ENCODE measurements at regions of chr5 and their contacts with region 1.

Region 1: DNA sequence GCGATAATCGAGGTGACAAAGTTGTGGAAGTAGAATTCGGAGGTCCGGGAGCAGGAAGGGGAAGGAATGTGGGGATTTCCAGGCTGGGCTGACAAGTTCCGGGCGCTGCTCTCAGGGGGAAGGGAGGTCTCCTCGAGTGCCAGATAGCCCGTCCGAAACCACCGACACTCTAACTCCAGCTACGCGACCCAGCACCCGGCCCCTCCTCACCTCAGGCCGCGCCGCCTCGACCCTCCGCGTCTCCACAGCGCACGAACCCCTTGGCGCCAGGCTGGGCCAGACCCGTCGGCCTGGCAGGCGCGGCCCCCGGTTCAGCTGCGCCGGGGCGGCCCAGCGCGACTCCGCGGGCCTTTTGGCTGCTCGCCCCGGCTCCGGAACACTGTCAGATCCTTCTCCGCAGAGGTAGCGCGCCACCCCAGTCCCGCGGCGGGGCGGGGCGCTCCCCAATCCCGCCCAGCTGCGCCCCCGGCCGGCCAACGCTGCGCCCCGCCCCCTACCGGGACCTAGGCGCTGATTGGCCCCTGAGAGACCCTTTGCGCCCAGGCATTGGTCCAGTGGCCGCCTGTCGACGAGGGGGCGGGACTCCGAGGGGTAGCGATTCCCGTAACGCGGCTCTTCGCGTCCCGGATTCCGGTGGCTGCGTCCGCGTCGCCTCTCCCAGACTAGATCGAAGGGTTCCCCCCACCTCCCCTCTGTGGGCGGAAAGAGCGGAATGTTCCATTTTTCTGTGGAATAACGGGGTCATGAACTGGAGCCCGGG is at the start of gene IL6ST:
- DNase-seq: peak; percentile 97
- H3K4me3 Mint-ChIP-seq: peak within 1 kb of the TSS; percentile 99
- H3K27ac Mint-ChIP-seq: peak within 1 kb of the TSS; percentile 100
- H3K4me1 Mint-ChIP-seq: peaks cover 56% of the 10 kb centered on the region
- H3K27me3 Mint-ChIP-seq: no peaks in the 10 kb centered on the region
- total RNA-seq, gene IL6ST: 61.0 to 64.1 TPM

Region 2: DNA sequence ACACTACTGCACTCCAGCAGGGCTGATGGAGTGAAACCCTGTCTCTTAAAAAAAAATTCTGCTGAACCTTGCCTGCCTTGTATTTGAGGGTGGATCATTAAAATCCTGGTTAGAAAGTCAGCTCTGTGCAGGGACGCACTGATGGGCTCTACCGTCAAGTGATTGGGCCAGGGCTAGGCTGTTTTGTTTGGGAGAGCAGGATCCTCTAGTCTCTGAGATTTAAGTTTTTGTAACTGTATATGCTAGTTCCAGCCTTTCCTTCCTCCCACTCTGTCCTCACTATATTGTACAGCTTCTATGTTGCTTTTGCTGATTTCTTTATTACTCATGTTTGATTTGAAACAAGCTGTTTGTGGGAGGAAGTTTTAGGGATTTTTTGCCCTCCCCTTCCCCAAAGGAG is 245.4 kb before region 1 on chr5:
- CTCF ChIA-PET with region 1: no interaction called
- POLR2A ChIA-PET with region 1: no interaction called
- intact Hi-C with region 1: no loop called
- DNase-seq: no peak
- H3K4me3 Mint-ChIP-seq: no peak overlapping the region
- H3K27ac Mint-ChIP-seq: no peak overlapping the region
- H3K4me1 Mint-ChIP-seq: no peaks in the 10 kb centered on the region
- H3K27me3 Mint-ChIP-seq: no peaks in the 10 kb centered on the region

Region 3: DNA sequence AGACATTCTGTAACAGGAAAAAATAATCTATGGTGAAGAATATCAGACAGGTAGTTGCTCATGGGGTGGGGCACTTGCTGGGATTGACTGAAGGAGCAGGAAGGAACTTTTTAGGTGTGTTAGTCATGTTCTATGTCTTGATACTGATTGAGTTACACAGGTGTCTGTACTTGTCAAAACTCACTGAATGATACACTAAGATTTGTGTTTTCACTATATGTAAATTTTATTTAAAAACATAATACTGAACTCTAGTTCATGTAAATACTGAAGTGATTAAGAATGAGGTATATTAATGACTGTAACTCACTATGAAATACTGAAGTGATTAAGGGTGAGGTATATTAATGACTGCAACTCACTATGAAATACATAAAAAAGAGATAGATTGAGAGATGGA is 28.5 kb before region 1 on chr5:
- CTCF ChIA-PET with region 1: no interaction called
- POLR2A ChIA-PET with region 1: interaction called, 4 read pairs
- intact Hi-C with region 1: loop called (anchors 2 kb)
- DNase-seq: no peak
- H3K4me3 Mint-ChIP-seq: no peak overlapping the region
- H3K27ac Mint-ChIP-seq: peak overlapping the region; percentile 34
- H3K4me1 Mint-ChIP-seq: peaks cover 45% of the 10 kb centered on the region
- H3K27me3 Mint-ChIP-seq: no peaks in the 10 kb centered on the region

Region 4: DNA sequence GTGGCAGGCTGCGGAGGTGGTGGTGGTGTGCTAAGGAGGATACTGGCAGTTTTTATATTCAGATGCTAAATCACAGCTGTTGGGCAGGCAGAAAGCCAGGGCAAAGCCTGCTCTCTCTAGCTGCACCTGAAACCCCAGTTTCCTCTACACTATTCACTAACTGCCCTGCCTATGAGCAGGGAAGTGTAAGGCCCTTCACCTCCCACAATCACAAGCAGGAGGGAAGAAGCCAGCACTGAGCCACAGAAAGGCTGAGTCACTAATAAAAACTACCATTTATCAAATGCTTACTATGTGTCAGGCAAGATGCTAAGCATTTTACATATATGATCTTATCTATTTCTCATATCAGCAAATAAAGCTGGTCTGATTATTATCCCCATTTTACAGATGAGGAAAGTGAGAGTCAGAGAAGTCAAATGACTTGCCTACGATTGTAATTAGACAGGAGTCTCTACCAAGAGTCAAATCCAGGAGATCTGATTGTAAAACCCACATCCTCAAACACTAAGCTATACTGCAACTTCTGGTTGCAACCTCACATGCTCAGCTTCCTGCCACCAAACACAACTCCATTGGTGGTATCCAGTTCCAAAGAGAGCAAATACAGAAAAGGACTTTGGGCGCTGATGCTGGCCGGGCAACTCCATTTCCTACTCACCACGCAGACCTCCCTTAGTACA is 17.7 kb after region 1 on chr5:
- CTCF ChIA-PET with region 1: interaction called, 3 read pairs
- POLR2A ChIA-PET with region 1: interaction called, 17 read pairs
- intact Hi-C with region 1: loop called (anchors 1 kb)
- DNase-seq: peak; percentile 61
- H3K4me3 Mint-ChIP-seq: peak overlapping the region; percentile 31
- H3K27ac Mint-ChIP-seq: peak overlapping the region; percentile 81
- H3K4me1 Mint-ChIP-seq: peaks cover 30% of the 10 kb centered on the region
- H3K27me3 Mint-ChIP-seq: no peaks in the 10 kb centered on the region

Region 5: DNA sequence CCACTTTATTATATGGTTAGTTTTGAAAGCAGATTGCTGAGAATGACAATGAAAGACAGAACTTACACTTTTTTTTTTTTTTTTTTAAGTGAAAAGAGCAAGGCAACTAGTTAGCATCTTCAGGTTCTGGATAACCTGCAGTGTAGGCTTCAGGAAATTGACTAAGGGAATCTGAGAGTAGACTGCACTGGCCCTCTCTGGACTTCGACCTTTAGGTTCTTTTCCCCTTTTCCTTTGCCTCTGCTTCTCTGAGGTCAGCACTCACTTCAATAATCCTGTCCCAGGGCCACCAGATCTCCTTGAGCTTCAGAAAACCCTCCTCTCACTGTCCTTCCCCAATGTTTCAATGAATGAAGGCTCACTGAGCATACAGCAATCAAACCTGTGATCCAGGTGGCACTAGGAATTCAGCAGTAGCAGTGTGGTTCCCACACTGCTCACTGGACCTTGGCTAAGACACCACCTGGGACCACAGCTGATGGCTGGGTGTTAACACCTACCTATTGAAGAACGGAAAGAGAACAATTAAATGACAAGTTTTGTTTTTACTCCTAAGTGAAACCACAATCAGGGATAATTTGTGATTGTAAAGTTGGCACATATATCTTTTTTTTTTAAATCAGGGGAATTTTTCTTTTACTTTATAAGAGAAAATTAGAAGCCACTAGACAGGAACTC is 85.8 kb after region 1 on chr5:
- CTCF ChIA-PET with region 1: interaction called, 4 read pairs
- POLR2A ChIA-PET with region 1: interaction called, 6 read pairs
- intact Hi-C with region 1: loop called (anchors 1 kb)
- DNase-seq: peak; percentile 50
- H3K4me3 Mint-ChIP-seq: peak overlapping the region; percentile 2
- H3K27ac Mint-ChIP-seq: peak overlapping the region; percentile 71
- H3K4me1 Mint-ChIP-seq: peaks cover 47% of the 10 kb centered on the region
- H3K27me3 Mint-ChIP-seq: no peaks in the 10 kb centered on the region

Region 6: DNA sequence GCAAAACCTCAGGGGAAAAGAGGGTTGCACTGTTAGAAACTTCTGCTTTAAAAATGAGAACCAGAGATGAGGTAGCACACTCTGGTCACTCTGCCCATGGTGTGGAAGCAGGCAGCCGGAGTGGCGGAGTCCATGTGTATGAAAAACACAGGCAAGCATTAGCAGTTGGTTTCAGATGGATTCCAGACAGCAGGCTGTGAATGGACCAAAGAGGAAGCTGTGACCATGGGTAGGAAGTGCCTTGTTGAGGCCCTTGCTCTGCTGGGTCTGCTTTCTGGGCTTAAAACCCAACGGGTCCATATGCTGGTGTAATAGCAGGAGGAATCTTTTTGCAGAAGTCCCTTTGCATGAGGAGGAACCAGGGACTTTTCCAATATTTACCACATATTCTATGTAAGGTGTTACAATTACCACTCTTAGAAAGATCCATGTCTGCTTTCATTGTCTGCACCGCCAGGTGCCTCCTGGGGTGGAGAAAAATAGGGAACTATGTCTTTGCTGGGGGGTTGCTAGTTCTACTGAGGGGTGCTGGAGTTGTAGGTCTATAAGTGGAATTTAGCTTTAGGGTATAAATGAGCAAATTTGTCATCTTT is 161.3 kb after region 1 on chr5:
- CTCF ChIA-PET with region 1: no interaction called
- POLR2A ChIA-PET with region 1: no interaction called
- intact Hi-C with region 1: loop called (anchors 2 kb)
- DNase-seq: no peak
- H3K4me3 Mint-ChIP-seq: peak overlapping the region; percentile 14
- H3K27ac Mint-ChIP-seq: peak overlapping the region; percentile 88
- H3K4me1 Mint-ChIP-seq: peaks cover 73% of the 10 kb centered on the region
- H3K27me3 Mint-ChIP-seq: no peaks in the 10 kb centered on the region

Region 7: DNA sequence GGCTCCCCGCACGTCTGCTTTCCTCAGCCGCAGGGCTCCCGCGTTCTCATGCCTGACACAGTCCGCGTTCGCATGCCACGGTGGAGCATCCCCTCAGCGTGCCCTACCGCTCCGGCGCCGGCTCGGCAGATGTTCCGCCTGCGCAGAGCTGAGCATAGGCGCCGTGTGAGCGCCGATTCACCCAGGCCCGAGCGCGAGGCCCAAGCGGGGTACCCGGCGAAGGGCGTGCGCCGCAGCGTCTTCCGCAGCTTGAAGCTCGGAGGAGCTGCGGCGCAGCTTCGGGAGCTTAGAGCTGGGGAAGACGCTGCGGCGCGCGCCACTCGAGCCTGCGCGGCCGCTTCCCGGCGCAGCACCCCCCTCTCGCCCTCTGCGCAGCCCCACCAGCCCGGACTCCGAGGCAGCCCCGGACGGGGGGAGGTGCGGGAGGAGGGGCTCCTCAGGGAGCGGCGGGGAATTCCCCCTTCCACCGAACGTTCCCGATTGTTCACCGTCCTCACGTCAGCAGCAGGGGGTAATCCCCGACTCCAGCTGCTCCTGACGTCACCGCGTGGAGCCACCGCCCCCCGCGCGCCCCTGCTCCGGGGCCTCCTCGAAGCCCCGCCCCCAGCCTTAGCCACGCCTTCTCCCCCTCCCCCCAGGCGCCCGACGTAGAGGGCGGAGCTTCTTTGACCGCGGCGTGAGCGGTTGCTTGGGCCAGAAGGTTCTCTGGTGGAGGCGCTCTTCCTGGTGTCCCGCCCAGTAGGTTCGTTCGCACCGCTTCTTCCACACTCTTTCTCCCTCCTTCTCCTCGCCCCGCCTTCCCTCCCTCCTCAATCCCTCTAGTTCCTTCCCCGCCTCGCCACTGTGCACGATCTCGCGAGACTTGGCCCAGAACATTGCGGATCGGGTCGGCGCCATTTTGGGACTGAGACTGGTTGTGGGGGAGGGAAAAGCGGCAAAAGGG is 1178.7 kb after region 1 on chr5 and contains the start of gene GPBP1:
- CTCF ChIA-PET with region 1: no interaction called
- POLR2A ChIA-PET with region 1: no interaction called
- intact Hi-C with region 1: loop called (anchors 5 kb)
- DNase-seq: peak; percentile 98
- H3K4me3 Mint-ChIP-seq: peak within 1 kb of the TSS; percentile 86
- H3K27ac Mint-ChIP-seq: peak within 1 kb of the TSS; percentile 98
- H3K4me1 Mint-ChIP-seq: peaks cover 20% of the 10 kb centered on the region
- H3K27me3 Mint-ChIP-seq: no peaks in the 10 kb centered on the region
- total RNA-seq, gene GPBP1: 94.1 to 98.5 TPM